Ascending aorta (tissue), 2 donors: ENCODE measurements at regions of chr1 and their contacts with region 1.

Region 1: GRCh38 chr1:65067491-65068201 is 80.4 kb upstream of the AK4 start:
- DNase-seq: peak; percentile 13 to 83
- H3K4me3 ChIP-seq: peak overlapping the region; percentile 69 to 96
- H3K27ac ChIP-seq: peak overlapping the region; percentile 92 to 95
- H3K4me1 ChIP-seq: peaks cover 0 to 8% of the 10 kb centered on the region in 2 donors
- H3K27me3 ChIP-seq: no peaks in the 10 kb centered on the region
- CTCF ChIP-seq: no peak

Region 2: DNA sequence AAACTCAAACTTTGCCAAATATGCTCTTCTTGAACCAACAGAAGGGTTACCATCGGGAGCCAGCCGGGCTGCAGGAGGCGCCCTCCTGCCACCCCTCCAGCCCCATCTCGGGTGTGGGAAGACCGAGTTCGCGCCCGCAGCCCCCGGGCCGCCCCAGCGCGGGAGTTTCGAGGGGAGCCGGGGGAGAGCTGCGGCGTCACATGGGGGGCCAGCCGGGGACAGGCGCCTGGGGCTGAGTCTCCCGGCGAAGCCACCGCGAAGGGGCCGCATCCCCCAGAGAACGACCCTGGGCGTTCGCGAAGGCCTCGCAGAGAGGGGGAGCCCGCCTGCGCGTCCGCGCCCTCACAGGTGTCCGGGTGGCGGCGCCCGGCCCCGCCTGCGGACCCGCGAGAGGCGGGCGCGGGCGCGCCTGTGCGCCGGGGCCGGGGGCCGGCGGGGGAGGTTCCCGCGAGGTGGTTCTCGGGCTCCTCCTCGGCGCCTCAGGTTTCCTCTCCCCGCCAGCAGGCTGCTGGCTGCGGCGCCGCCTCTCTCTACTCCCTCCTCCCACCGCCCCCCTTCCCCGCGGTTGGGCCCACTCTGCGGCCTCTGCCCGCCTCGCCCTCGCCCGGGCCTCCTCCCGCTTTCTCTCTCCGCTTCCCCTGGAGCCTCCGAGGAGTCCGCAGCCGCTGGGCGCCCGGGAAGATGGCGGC is 323.0 kb before region 1 on chr1 and contains the start of gene RAVER2:
- intact Hi-C with region 1: loop called (anchors 10 kb)
- DNase-seq: peak; percentile 16 to 85
- H3K4me3 ChIP-seq: peak within 1 kb of the TSS; percentile 84 to 87
- H3K27ac ChIP-seq: peak within 1 kb of the TSS; percentile 86 to 90
- H3K4me1 ChIP-seq: peaks cover 0 to 20% of the 10 kb centered on the region in 2 donors
- H3K27me3 ChIP-seq: no peaks in the 10 kb centered on the region
- CTCF ChIP-seq: peak in 2 of 3 experiments; percentile 32 to 60
- total RNA-seq, gene RAVER2: 17.7 TPM

Region 3: GRCh38 chr1:64966158-64966971 is 101.3 kb before region 1 on chr1 and contains the start of gene JAK1:
- intact Hi-C with region 1: loop called (anchors 1 kb)
- DNase-seq: peak in 1 of 2 donors; percentile 87
- H3K4me3 ChIP-seq: peak within 1 kb of the TSS; percentile 76 to 98
- H3K27ac ChIP-seq: peak within 1 kb of the TSS; percentile 94 to 97
- H3K4me1 ChIP-seq: peaks cover 0 to 6% of the 10 kb centered on the region in 2 donors
- H3K27me3 ChIP-seq: no peaks in the 10 kb centered on the region
- CTCF ChIP-seq: no peak
- total RNA-seq, gene JAK1: 53.5 TPM

Region 4: GRCh38 chr1:65148548-65149350 is 81.1 kb after region 1 on chr1:
- intact Hi-C with region 1: loop called (anchors 2 kb)
- DNase-seq: peak in 1 of 2 donors; percentile 71
- H3K4me3 ChIP-seq: peak overlapping the region; percentile 81 to 89
- H3K27ac ChIP-seq: peak overlapping the region; percentile 92 to 93
- H3K4me1 ChIP-seq: peaks cover 0 to 3% of the 10 kb centered on the region in 2 donors
- H3K27me3 ChIP-seq: no peaks in the 10 kb centered on the region
- CTCF ChIP-seq: no peak

Region 5: GRCh38 chr1:65254319-65255034 is 186.8 kb after region 1 on chr1:
- intact Hi-C with region 1: loop called (anchors 5 kb)
- DNase-seq: peak; percentile 25 to 86
- H3K4me3 ChIP-seq: peak overlapping the region; percentile 72 to 90
- H3K27ac ChIP-seq: peak overlapping the region; percentile 45 to 72
- H3K4me1 ChIP-seq: peaks cover 5 to 11% of the 10 kb centered on the region in 2 donors
- H3K27me3 ChIP-seq: no peaks in the 10 kb centered on the region
- CTCF ChIP-seq: peak; percentile 5 to 30 (median 17)

Region 6: DNA sequence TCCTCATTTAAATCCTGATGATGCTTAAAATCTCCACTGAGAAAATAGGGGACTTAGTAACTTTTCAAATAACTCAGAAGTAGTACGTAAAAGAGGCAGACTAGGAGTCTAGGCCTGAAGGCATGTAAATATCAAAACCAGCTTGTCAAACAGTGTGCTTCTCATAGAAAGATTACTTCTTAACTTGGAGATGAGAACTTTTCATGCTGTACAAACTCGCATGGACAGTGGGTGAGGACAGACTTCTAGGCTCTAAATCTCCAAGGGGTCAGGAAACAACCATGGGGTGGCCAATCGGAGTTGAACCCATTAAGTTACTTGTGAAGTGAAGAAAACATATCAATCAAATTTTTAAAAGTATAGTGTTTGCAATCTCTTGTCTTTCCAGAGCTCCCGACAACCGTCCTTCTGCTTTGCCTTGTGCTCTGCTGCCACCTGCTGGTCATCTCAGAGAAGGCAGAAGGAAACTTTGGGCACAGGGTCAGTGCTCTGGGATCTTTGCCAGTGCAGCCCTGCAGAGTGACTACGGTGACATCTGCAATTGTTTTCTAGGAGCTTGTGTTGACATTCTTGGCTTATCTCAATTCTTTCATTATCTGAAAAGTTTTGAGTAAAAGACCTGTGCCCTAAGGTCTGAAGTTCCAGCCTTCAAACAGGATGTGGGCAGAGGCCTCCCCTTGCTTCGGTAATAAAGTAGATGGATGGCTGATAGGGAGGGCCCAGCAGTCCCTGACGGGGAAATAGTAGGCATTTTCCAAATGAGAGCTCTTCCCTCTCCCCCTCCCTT is 620.0 kb after region 1 on chr1:
- intact Hi-C with region 1: loop called (anchors 10 kb)
- DNase-seq: peak in 1 of 2 donors; percentile 88
- H3K4me3 ChIP-seq: no peak overlapping the region
- H3K27ac ChIP-seq: no peak overlapping the region
- H3K4me1 ChIP-seq: peaks cover 0 to 18% of the 10 kb centered on the region in 2 donors
- H3K27me3 ChIP-seq: no peaks in the 10 kb centered on the region
- CTCF ChIP-seq: peak; percentile 84 to 94 (median 93)